A549 (cell line): ENCODE measurements at regions of chr17 and their contacts with region 1.

Region 1: GRCh38 chr17:73969956-73970355 is 233.5 kb upstream of the RPL38 start:
- DNase-seq: no peak
- ATAC-seq: peak; percentile 38 to 48; a peak in 2 of 6 replicates
- H3K4me3 ChIP-seq: no peak overlapping the region
- H3K27ac ChIP-seq: no peak overlapping the region
- H3K4me1 ChIP-seq: no peaks in the 10 kb centered on the region
- CTCF ChIP-seq: no peak
- EP300 ChIP-seq: no peak
- POLR2A ChIP-seq: no peak
- RAD21 ChIP-seq: no peak

Region 2: GRCh38 chr17:73956669-73957465 is 13.1 kb before region 1 on chr17:
- CTCF ChIA-PET with region 1: interaction called, 11 read pairs
- POLR2A ChIA-PET with region 1: no interaction called
- DNase-seq: peak; percentile 78 to 88
- ATAC-seq: peak; percentile 75 to 91
- H3K4me3 ChIP-seq: no peak overlapping the region
- H3K27ac ChIP-seq: no peak overlapping the region; a peak in 1 of 6 replicates
- H3K4me1 ChIP-seq: peaks cover 4% of the 10 kb centered on the region; the same call in 1 of the 3 replicates
- CTCF ChIP-seq: peak; percentile 72
- EP300 ChIP-seq: no peak
- POLR2A ChIP-seq: no peak
- RAD21 ChIP-seq: peak; percentile 88 to 91